A549 (cell line): ENCODE measurements at regions of chr10 and their contacts with region 1.

Region 1: GRCh38 chr10:110304780-110305421 is at the start of gene SMNDC1:
- DNase-seq: peak; percentile 86 to 99
- ATAC-seq: peak; percentile 91 to 95
- H3K4me3 ChIP-seq: peak within 1 kb of the TSS; percentile 93
- H3K27ac ChIP-seq: peak within 1 kb of the TSS; percentile 97 to 98
- H3K4me1 ChIP-seq: peaks cover 57% of the 10 kb centered on the region
- CTCF ChIP-seq: no peak
- EP300 ChIP-seq: no peak
- POLR2A ChIP-seq: peak; percentile 28; the same call in 1 of the 2 replicates
- RAD21 ChIP-seq: no peak; a peak in 1 of 5 replicates
- polyA plus RNA-seq, gene SMNDC1: 35.4 and 40.2 TPM in 2 replicates

Region 2: DNA sequence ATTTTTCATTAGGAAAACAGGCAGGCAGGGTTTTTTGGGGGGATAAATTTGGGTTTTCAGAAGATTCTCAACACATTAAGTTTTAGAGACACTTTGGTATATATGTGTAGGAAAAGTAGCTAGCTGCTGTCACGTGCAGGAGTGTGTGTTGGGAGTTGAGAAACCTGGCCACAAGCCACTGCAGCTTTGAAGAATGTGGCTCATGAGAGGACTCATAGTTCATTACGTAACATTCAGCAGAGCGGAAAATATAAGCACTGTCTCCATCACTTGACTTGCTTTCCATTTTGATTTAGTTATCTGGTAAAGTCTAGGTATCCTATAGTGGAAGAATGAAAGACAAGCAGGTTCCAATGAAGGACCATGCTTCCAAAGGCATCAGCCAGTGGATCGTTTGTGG is 31.4 kb before region 1 on chr10:
- CTCF ChIA-PET with region 1: no interaction called
- POLR2A ChIA-PET with region 1: no interaction called
- DNase-seq: peak in 1 of 2 experiments; percentile 10
- ATAC-seq: no peak
- H3K4me3 ChIP-seq: no peak overlapping the region
- H3K27ac ChIP-seq: no peak overlapping the region
- H3K4me1 ChIP-seq: no peaks in the 10 kb centered on the region
- CTCF ChIP-seq: no peak
- EP300 ChIP-seq: no peak
- POLR2A ChIP-seq: no peak
- RAD21 ChIP-seq: no peak

Region 3: DNA sequence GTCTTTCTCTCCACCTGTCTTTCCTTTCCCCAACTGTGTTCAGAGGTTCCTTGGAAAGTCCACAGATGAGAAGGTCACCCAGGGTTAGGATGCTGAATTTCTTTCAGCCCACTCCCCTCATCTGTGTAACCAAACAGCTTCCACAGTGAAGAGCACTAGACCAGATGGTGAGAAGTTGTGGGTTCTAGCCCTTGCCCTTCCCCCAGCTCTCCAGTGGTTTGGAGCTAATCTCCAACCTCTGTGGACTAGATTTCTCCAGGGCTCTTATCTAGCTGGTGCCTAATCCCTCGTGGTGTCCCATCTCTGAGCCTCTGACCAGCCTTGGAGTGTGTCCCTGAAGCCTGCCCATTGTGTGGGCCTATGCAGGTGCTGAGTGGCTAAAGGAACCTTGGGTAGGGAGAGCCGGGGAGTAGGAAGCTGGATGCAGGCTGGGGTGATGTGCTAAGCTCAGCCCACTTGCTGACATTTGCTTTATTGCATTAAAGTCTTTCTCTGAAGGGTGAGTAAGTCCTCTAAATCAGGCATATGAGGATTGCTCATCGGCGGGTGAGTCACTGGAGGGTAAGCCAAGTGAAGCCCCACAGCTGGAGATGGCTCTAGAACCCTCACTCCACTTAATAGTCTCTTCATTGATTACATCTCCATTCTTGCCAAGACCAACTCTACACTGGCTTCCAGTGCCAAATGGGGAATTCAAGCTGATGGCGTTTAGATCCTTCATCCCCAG is 207.7 kb after region 1 on chr10:
- CTCF ChIA-PET with region 1: interaction called, 26 read pairs
- POLR2A ChIA-PET with region 1: no interaction called
- DNase-seq: peak; percentile 59 to 77
- ATAC-seq: peak; percentile 19 to 57
- H3K4me3 ChIP-seq: no peak overlapping the region
- H3K27ac ChIP-seq: peak overlapping the region; percentile 43 to 76; a peak in 5 of 6 replicates
- H3K4me1 ChIP-seq: peaks cover 57% of the 10 kb centered on the region
- CTCF ChIP-seq: no peak
- EP300 ChIP-seq: no peak
- POLR2A ChIP-seq: no peak
- RAD21 ChIP-seq: no peak

Region 4: GRCh38 chr10:110530131-110530831 is 225.4 kb after region 1 on chr10:
- CTCF ChIA-PET with region 1: no interaction called
- POLR2A ChIA-PET with region 1: interaction called, 11 read pairs
- DNase-seq: peak; percentile 88 to 91
- ATAC-seq: peak; percentile 68 to 80
- H3K4me3 ChIP-seq: peak overlapping the region; percentile 37
- H3K27ac ChIP-seq: peak overlapping the region; percentile 92 to 93
- H3K4me1 ChIP-seq: peaks cover 68% of the 10 kb centered on the region
- CTCF ChIP-seq: no peak
- EP300 ChIP-seq: peak; percentile 80 to 95; a peak in 3 of 5 replicates
- POLR2A ChIP-seq: peak; percentile 39
- RAD21 ChIP-seq: peak in 1 of 2 experiments; percentile 47; a peak in 2 of 5 replicates

Region 5: GRCh38 chr10:110600487-110601101 is 295.7 kb after region 1 on chr10:
- CTCF ChIA-PET with region 1: interaction called, 44 read pairs
- POLR2A ChIA-PET with region 1: interaction called, 6 read pairs
- DNase-seq: peak; percentile 27 to 82
- ATAC-seq: peak; percentile 71 to 91; a peak in 5 of 6 replicates
- H3K4me3 ChIP-seq: no peak overlapping the region
- H3K27ac ChIP-seq: peak overlapping the region in 1 of 2 experiments; percentile 22; a peak in 1 of 6 replicates
- H3K4me1 ChIP-seq: peaks cover 3% of the 10 kb centered on the region; the same call in 1 of the 3 replicates
- CTCF ChIP-seq: peak; percentile 82
- EP300 ChIP-seq: no peak
- POLR2A ChIP-seq: no peak
- RAD21 ChIP-seq: peak; percentile 65